ENCODE measurements at regions of chr4 and their contacts with region 1.

Region 1: GRCh38 chr4:99324979-99325378 is 3.8 kb upstream of the ADH1B start:
- DNase-seq: peak in 1 of 2 donors; percentile 83
- H3K4me3 ChIP-seq: no peak overlapping the region
- H3K27ac ChIP-seq: peak overlapping the region; percentile 81 to 82
- H3K4me1 ChIP-seq: peaks cover 6 to 24% of the 10 kb centered on the region in 2 donors
- H3K27me3 ChIP-seq: no peaks in the 10 kb centered on the region
- CTCF ChIP-seq: no peak

Region 2: DNA sequence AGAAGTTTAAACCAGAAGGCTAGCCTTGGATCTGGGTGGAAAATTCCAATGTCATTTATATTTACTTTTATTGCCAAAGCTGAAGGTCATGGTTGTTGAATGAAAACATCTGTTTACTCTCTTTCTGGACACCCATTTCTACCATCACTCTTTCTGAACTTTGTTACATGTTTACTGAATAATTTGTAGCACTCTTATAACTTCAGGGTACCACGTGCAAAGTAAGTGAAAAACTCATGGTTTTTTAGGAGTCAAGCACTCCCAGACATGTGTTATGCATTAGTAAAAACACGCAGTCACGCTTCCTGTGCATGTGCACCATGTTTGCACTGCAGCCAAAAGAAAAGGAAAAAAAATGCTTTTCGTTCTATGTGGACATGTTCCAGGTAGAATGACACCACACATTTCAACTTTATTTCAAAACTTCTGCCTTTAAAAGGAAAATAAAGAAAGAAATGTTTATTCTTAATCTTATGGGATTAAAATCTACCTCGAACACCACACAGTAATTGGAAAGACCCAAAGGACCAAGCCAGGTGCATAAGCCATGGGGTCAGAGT is 58.9 kb after region 1 on chr4:
- intact Hi-C with region 1: loop called (anchors 5 kb)
- DNase-seq: peak in 1 of 2 donors; percentile 83
- H3K4me3 ChIP-seq: no peak overlapping the region
- H3K27ac ChIP-seq: peak overlapping the region; percentile 82 to 91
- H3K4me1 ChIP-seq: peaks cover 0 to 4% of the 10 kb centered on the region in 2 donors
- H3K27me3 ChIP-seq: no peaks in the 10 kb centered on the region
- CTCF ChIP-seq: no peak

Region 3: DNA sequence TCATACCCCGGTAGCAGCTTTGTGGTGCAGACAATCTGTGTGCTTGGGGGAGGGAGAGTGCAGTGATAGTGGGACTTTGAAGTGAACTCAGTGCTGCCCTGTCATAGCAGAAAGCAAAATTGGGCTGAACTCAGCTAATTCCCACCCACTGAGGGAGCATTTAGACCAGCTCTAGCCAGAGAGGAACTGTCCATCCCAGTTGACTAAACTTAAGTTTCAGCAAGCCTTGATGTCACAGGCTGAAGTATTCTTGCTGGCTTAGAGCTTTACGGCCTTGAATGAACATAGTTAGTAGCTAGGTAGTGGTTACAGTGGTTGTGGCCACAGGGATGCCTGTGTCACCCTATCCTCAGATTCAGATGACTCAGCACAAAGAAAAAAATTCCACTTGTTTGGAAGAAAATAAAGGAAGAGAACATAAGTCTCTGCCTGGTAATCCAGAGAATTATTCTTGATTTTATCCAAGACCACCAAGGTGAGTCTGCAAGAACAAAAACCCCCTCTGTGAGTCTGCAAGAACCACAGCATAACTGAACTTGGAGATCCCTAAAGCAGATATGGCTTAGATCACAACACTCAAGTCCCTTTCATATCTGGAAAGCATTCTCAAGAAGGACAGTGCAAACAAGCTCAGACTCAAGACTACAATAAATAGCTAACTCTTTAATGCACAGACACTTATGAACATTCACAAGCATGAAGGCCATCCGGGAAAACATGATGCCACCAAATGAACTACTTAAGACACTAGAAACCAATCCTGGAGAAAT is 70.8 kb after region 1 on chr4:
- intact Hi-C with region 1: loop called (anchors 2 kb)
- DNase-seq: no peak
- H3K4me3 ChIP-seq: no peak overlapping the region
- H3K27ac ChIP-seq: peak overlapping the region; percentile 92 to 95
- H3K4me1 ChIP-seq: peaks cover 5 to 19% of the 10 kb centered on the region in 2 donors
- H3K27me3 ChIP-seq: no peaks in the 10 kb centered on the region
- CTCF ChIP-seq: no peak

Region 4: DNA sequence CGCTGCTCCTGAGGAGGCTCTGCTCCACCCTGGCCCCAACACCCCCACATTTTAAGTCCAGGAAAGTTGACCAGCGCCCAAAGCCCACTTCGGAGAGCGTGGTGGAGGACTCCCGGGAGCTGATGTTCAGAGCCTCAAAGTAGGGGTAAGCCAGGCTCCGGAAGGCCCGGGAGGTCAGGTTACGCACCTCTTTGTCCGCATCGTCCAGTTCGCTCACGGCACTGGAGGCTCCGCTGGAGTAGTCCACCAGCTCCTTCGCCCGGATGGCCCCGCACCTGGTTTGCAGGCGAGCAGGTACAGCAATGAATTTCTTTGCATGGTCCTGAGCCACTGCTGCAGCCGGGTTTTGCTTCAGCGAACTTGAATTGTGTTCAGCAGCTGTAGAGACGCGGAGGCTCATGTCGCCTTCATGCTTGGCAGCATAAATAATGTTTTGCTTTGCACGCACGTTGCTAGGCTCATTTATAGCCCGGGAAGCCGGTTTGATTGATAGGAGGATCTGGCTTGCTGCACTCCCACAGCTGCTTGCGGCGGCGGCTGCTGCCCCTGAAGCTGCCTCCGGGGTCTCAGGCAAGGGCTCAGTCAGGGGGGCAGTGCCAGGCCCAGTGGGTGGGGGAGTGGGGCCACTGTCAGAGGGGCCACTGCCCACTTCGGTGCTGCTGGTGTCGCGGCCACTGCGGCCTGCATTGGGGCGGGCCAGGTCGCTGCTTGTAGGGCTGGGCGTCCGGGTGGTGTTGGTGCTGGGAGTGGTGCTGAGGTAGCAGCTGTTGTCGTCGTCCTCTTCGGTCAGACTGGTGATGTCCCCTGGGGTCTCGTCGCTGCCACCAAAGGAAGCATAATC is 327.8 kb after region 1 on chr4:
- intact Hi-C with region 1: no loop called
- DNase-seq: no peak
- H3K4me3 ChIP-seq: no peak overlapping the region
- H3K27ac ChIP-seq: no peak overlapping the region
- H3K4me1 ChIP-seq: peaks cover 3 to 4% of the 10 kb centered on the region in 2 donors
- H3K27me3 ChIP-seq: no peaks in the 10 kb centered on the region
- CTCF ChIP-seq: no peak